Motor neuron (in vitro differentiated cells): ENCODE measurements at regions of chr10 and their contacts with region 1.

Region 1: DNA sequence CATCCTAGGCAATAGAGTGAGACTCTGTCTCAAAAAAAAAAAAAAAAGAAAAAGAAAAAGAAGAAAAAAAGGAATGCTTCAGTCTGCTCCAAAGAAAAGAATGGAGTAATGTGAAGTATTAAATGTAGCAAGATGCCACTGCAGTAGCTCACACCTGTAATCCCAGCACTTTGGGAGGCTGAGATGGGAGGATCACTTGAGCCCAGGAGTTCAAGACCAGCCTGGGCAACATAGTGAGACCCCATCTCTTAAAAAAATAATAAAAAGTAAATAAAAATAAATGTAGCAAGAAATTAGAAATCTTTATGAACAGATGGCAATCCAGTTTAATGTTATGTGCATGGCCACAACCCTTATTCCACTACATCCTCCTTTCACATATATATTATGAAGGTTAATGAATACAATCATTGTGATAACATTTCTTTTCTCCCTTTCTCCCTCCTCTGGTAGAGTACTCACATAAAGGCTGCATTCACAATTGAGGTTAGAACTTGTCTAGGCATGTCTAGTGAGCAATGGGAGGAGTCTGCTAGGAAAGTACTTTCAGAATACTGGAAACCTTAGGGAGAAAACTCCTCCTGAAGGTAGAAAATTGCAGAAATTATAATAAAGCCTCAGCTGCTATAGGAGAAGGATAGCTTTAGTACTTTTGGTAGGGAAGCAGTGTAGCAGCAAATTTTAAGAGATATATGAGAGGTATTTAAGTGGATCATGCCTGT is 20.4 kb downstream of the KLLN start:
- ATAC-seq: peak in 4 of 8 experiments; percentile 89 to 98 (median 98)
- H3K4me3 ChIP-seq: no peak overlapping the region
- H3K27ac ChIP-seq: no peak overlapping the region
- H3K4me1 ChIP-seq: no peaks in the 10 kb centered on the region

Region 2: GRCh38 chr10:87723500-87723899 is 119.4 kb before region 1 on chr10:
- in situ Hi-C with region 1: no loop called
- ATAC-seq: no peak
- H3K4me3 ChIP-seq: no peak overlapping the region
- H3K27ac ChIP-seq: no peak overlapping the region
- H3K4me1 ChIP-seq: no peaks in the 10 kb centered on the region

Region 3: DNA sequence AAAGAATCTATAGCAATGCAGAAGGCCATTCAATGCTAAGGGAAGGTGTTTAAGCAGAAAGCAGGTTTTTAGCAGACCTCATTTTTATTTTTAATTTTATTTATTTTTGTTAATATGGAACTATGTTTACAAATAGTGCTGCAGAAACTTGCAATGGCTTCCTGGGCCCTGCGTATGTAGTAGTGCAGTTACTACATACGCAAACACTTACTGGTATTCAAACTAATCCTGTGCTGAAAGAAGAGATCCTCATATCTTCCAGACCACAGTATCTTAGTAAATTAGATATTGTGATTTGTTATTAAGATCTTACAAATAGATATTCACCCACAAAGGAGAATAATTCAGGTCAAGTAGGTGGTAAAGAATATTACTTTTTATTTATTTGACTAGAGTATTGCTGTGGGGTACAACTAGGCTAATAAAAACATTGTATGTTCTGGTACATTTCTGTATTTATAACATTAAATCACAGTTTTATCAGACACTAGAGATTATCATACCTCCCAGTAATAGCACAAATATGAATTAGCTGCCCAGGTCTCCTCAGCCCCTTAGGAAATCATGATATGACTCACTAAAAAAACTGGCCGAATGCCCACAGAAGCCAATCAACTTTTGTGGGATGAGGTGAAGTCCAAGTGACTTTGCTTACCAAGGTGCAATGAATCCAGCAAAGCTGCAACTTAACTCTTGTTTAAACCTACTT is 682.6 kb after region 1 on chr10:
- in situ Hi-C with region 1: loop called in 2 of 9 experiments (anchors 25 kb)
- ATAC-seq: peak in 1 of 8 experiments; percentile 32
- H3K4me3 ChIP-seq: no peak overlapping the region
- H3K27ac ChIP-seq: no peak overlapping the region
- H3K4me1 ChIP-seq: no peaks in the 10 kb centered on the region

Region 4: DNA sequence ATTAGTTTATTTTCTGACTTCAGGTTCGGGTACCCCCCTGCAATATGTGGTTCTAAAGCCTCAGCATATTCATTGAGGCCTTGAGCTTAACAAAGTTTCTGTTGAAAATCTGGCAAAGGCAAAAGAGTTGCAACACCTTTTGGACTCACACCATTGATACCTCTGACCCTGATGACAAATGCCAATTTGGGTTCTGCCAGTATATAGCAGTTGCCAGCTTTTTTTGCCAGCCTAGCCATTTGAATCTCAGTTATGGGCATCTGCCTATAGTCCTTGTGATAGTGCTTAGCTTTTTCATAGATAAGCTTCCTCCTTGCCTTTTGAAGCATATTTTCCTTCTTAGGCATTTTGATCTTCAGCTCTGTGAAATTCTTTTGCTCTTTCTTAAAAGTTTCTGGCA is 775.6 kb after region 1 on chr10:
- in situ Hi-C with region 1: no loop called
- ATAC-seq: no peak
- H3K4me3 ChIP-seq: no peak overlapping the region
- H3K27ac ChIP-seq: no peak overlapping the region
- H3K4me1 ChIP-seq: no peaks in the 10 kb centered on the region